ENCODE measurements at regions of chr7 and their contacts with region 1.

Region 1: DNA sequence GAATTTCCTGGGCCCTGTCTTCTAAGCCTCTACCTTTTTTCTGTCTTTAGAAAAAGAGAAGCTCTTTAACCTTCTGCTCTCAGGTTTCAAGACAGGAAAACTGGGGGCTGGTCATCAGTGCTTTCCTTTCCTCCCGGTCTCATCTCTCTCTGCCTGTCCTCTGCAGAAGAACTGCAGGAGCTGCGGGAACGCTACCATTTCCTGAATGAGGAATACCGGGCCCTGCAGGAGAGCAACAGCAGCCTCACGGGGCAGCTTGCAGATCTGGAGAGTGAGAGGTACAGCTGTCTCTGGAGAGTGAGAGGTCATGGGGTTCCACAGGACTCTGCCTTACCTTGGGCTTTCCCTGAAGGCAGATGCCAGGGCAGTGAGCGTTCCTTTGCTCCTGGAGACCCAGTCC is 12.7 kb downstream of the CCDC136 start:
- DNase-seq: no peak
- H3K4me3 ChIP-seq: no peak overlapping the region
- H3K27ac ChIP-seq: no peak overlapping the region
- H3K4me1 ChIP-seq: no peaks in the 10 kb centered on the region
- H3K27me3 ChIP-seq: no peaks in the 10 kb centered on the region
- CTCF ChIP-seq: no peak

Region 2: DNA sequence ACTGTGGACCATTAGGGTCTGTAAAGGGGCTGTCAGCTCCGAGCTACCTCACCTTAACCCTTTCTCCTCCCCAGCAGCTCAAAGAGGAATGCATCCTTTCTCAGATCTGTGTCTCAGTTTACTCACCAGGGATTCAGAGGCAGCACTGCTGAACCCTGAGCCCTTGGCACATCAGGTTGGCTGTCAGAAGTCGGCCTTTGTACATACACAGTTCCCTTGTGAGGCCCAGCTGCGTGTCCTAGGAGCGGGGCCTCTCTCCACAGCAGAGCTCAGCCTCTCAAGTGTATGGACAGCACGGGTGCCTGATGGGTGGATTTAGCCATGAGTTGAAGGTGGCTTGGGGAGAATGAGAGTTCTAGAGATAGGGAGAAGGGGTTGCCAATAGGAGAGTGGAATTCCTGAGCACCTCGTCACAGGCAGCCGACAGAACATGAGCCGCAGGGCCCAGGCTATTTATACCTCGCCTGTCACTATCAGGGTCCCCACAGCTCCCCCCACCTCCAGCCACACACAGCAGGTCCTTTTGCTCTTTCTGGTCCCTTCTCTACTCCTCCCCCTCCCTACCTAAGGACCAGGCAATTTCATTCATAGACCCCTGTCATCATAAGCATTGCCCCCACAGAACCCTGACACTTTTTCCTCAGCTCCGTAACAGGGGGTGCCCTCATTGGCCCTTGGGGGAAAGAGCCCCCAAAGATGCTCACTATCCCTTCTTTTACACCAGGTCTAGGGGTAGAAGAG is 23.7 kb after region 1 on chr7:
- CTCF ChIA-PET with region 1: no interaction called
- POLR2A ChIA-PET with region 1: no interaction called
- intact Hi-C with region 1: no loop called
- DNase-seq: peak in 1 of 2 experiments; percentile 52
- H3K4me3 ChIP-seq: no peak overlapping the region
- H3K27ac ChIP-seq: peak overlapping the region; percentile 77
- H3K4me1 ChIP-seq: peaks cover 36% of the 10 kb centered on the region
- H3K27me3 ChIP-seq: no peaks in the 10 kb centered on the region
- CTCF ChIP-seq: no peak

Region 3: DNA sequence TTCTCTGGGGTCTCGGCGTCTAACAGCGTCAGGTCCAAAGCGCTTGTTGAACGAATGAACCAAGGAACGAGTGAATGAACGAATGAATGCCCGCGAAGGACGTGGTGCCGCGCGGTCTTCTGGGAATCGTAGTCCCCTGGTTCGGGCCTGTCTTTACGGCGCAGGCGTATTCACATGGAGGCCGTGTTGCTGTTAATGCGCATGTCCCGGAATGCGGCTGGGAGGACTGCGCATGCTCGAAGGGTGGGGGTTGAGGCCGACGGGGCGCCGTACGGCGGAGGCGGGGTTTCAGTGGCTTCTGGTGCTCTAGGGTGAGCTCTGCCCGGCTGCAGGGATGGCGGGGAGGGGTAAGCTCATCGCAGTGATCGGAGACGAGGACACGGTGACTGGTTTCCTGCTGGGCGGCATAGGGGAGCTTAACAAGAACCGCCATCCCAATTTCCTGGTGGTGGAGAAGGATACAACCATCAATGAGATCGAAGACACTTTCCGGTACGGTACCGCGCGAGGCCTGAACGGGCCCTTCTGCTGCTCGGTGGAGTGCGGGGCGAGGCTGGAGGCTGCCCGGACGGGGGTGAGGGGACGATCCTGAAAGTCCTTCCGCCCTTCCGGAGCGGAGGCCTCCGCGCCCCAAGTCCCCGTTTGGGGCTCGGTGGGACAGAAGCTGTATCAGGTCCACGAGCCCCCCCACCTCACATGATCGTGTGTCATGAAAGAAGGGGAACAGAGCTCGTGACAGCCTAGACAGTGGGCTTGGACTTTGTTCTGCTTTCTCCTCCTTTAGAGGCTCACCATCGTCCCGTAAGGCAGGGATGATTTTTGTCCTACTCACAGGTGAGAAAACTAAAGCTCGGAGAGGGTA is 58.3 kb after region 1 on chr7 and contains the start of gene ATP6V1F:
- CTCF ChIA-PET with region 1: no interaction called
- POLR2A ChIA-PET with region 1: interaction called, 22 read pairs
- intact Hi-C with region 1: no loop called
- DNase-seq: peak; percentile 88 to 99
- H3K4me3 ChIP-seq: peak within 1 kb of the TSS; percentile 71
- H3K27ac ChIP-seq: no peak within 1 kb of the TSS
- H3K4me1 ChIP-seq: peaks cover 10% of the 10 kb centered on the region
- H3K27me3 ChIP-seq: no peaks in the 10 kb centered on the region
- CTCF ChIP-seq: no peak
- total RNA-seq, gene ATP6V1F: 114 and 169 TPM in 2 replicates